PC-9 (cell line): ENCODE measurements at regions of chr5 and their contacts with region 1.

Region 1: DNA sequence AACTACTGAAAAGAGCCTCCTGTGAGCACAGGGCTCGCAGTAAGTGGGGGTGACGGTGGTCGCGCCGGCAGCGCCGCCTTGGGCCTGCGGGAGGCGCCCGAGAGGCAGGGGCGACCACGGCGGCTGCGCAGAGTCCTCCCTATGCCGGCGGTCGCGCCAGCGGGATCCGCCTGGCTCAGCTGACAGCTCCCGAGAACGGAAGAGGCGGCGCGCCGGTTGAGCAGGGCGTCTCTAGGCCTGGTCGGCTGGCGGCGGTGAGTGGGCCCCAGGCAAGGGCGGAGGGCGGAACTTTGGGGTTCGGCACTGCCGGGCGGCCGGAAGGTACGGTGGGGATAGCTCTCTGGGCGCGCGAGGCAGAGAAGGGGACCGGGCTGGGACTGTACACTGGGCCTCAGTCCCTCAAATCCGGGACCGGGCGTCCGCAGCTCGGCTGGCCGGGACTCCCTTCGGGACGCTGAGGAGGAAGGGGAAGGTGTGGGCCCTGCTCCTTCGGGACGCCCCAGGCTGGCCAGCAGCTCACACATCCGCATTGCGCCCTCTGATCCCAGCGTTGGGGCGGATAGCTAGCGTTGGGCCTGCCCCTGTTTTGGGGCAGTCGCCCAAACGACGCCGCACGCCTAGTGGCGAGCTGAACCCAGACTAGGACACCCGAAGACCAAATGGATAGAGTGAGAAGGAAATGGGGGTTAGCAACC is at the start of gene RNF14:
- DNase-seq: peak; percentile 87 to 94
- H3K4me3 ChIP-seq: peak within 1 kb of the TSS; percentile 74
- H3K27ac ChIP-seq: peak within 1 kb of the TSS; percentile 77
- H3K4me1 ChIP-seq: peaks cover 20% of the 10 kb centered on the region
- H3K27me3 ChIP-seq: no peaks in the 10 kb centered on the region
- CTCF ChIP-seq: peak; percentile 96
- total RNA-seq, gene RNF14: 26.6 and 29.7 TPM in 2 replicates

Region 2: DNA sequence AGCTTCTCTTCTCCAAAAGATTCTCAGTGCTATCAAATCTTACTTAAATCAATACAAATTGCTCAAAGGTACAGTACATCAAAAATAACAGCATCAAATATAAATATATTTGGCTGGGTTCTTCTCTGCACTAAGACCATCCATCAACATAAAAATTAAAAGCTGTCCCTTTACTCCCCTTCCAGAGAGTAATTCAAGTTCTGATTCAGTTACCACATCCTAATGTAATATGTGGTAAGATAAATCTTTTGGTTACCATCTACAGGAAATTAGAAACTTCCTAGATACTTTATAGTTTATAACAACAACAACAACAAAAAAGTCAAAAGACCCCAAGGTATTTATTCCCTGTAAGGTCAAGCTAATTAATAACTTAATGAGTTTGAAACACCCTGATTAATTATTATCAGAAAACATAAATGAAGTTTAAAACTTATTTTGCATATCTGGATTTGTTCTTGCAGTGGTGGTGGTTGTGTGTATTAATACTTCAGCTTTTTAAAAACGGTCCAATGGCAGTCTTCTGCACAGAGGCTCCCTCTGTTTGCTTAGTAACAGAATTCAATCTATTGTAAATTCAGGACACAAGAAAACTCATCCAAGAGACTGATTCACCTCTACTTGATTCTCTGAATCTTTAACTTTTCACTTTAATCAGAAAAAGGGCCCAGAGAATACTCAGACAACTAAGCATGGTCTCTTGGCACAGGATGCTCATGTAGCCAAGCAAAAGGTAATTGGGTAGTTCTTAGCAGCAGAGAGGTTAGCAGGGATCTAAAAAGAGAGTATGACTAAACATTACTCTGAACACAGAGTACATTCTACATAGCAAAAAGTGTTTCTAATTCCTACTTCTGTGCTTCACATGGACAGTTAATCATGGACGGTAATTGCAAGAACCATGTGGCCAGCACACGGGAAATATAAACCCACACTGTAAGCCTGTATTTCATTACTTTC is 370.4 kb before region 1 on chr5:
- CTCF ChIA-PET with region 1: no interaction called
- POLR2A ChIA-PET with region 1: no interaction called
- intact Hi-C with region 1: loop called (anchors 10 kb)
- DNase-seq: no peak
- H3K4me3 ChIP-seq: no peak overlapping the region
- H3K27ac ChIP-seq: no peak overlapping the region
- H3K4me1 ChIP-seq: peaks cover 6% of the 10 kb centered on the region
- H3K27me3 ChIP-seq: no peaks in the 10 kb centered on the region
- CTCF ChIP-seq: no peak

Region 3: GRCh38 chr5:141889282-141889871 is 79.7 kb before region 1 on chr5:
- CTCF ChIA-PET with region 1: interaction called, 6 read pairs
- POLR2A ChIA-PET with region 1: no interaction called
- intact Hi-C with region 1: loop called (anchors 2 kb)
- DNase-seq: no peak
- H3K4me3 ChIP-seq: no peak overlapping the region
- H3K27ac ChIP-seq: no peak overlapping the region
- H3K4me1 ChIP-seq: no peaks in the 10 kb centered on the region
- H3K27me3 ChIP-seq: no peaks in the 10 kb centered on the region
- CTCF ChIP-seq: peak; percentile 59; the same call in 1 of the 2 replicates

Region 4: GRCh38 chr5:141923448-141924352 is 45.4 kb before region 1 on chr5 and contains the start of gene DELE1:
- CTCF ChIA-PET with region 1: no interaction called
- POLR2A ChIA-PET with region 1: interaction called, 14 read pairs
- intact Hi-C with region 1: no loop called
- DNase-seq: peak; percentile 89 to 93
- H3K4me3 ChIP-seq: peak within 1 kb of the TSS; percentile 98
- H3K27ac ChIP-seq: peak within 1 kb of the TSS; percentile 86
- H3K4me1 ChIP-seq: peaks cover 12% of the 10 kb centered on the region
- H3K27me3 ChIP-seq: no peaks in the 10 kb centered on the region
- CTCF ChIP-seq: no peak
- total RNA-seq, gene DELE1: 68.5 and 80.8 TPM in 2 replicates

Region 5: GRCh38 chr5:142012792-142013388 is 43.8 kb after region 1 on chr5 and contains the start of gene GNPDA1:
- CTCF ChIA-PET with region 1: no interaction called
- POLR2A ChIA-PET with region 1: no interaction called
- intact Hi-C with region 1: loop called (anchors 2 kb)
- DNase-seq: peak; percentile 66 to 81
- H3K4me3 ChIP-seq: peak within 1 kb of the TSS; percentile 61
- H3K27ac ChIP-seq: peak within 1 kb of the TSS; percentile 82
- H3K4me1 ChIP-seq: peaks cover 34% of the 10 kb centered on the region
- H3K27me3 ChIP-seq: no peaks in the 10 kb centered on the region
- CTCF ChIP-seq: no peak
- total RNA-seq, gene GNPDA1: 46.5 and 54.1 TPM in 2 replicates

Region 6: GRCh38 chr5:142492781-142493281 is 523.8 kb after region 1 on chr5:
- CTCF ChIA-PET with region 1: interaction called, 17 read pairs
- POLR2A ChIA-PET with region 1: no interaction called
- intact Hi-C with region 1: no loop called
- DNase-seq: no peak
- H3K4me3 ChIP-seq: no peak overlapping the region
- H3K27ac ChIP-seq: no peak overlapping the region
- H3K4me1 ChIP-seq: no peaks in the 10 kb centered on the region
- H3K27me3 ChIP-seq: no peaks in the 10 kb centered on the region
- CTCF ChIP-seq: no peak